Sigmoid colon (tissue), 7 donors: ENCODE measurements at regions of chr1 and their contacts with region 1.

Region 1: GRCh38 chr1:63773815-63774616 is at the start of gene ROR1:
- DNase-seq: peak; percentile 96
- H3K4me3 ChIP-seq: peak within 1 kb of the TSS; percentile 76 to 89 (median 88)
- H3K27ac ChIP-seq: peak within 1 kb of the TSS; percentile 86 to 96 (median 92)
- H3K4me1 ChIP-seq: peaks cover 0 to 48% (median 29%) of the 10 kb centered on the region in 4 donors
- H3K27me3 ChIP-seq: no peaks in the 10 kb centered on the region
- CTCF ChIP-seq: peak; percentile 72 to 81 (median 76)
- EP300 ChIP-seq: no peak
- POLR2A ChIP-seq: peak; percentile 30 to 44
- total RNA-seq, gene ROR1: 27.3 to 37.1 (median 29.3) TPM

Region 2: GRCh38 chr1:63367215-63368103 is 406.6 kb before region 1 on chr1 and contains the start of gene ALG6:
- intact Hi-C with region 1: no loop called
- DNase-seq: peak; percentile 94
- H3K4me3 ChIP-seq: peak within 1 kb of the TSS; percentile 81 to 90 (median 88)
- H3K27ac ChIP-seq: peak within 1 kb of the TSS; percentile 85 to 87 (median 86)
- H3K4me1 ChIP-seq: peaks cover 0 to 16% (median 10%) of the 10 kb centered on the region in 4 donors
- H3K27me3 ChIP-seq: no peaks in the 10 kb centered on the region
- CTCF ChIP-seq: peak in 1 of 4 experiments; percentile 9
- EP300 ChIP-seq: no peak
- POLR2A ChIP-seq: peak in 1 of 2 donors; percentile 36
- total RNA-seq, gene ALG6: 6.2 to 11.4 (median 7.1) TPM

Region 3: GRCh38 chr1:63691701-63692425 is 82.2 kb before region 1 on chr1:
- intact Hi-C with region 1: loop called (anchors 2 kb)
- DNase-seq: peak; percentile 84
- H3K4me3 ChIP-seq: no peak overlapping the region
- H3K27ac ChIP-seq: peak overlapping the region in 3 of 4 donors; percentile 57 to 74 (median 60)
- H3K4me1 ChIP-seq: peaks cover 0 to 30% (median 20%) of the 10 kb centered on the region in 4 donors
- H3K27me3 ChIP-seq: no peaks in the 10 kb centered on the region
- CTCF ChIP-seq: peak; percentile 62 to 82 (median 68)
- EP300 ChIP-seq: peak in 1 of 4 donors; percentile 38
- POLR2A ChIP-seq: no peak

Region 4: GRCh38 chr1:63868268-63868781 is 94.3 kb after region 1 on chr1:
- intact Hi-C with region 1: no loop called
- DNase-seq: peak; percentile 76
- H3K4me3 ChIP-seq: no peak overlapping the region
- H3K27ac ChIP-seq: peak overlapping the region in 3 of 4 donors; percentile 73 to 80 (median 74)
- H3K4me1 ChIP-seq: peaks cover 0 to 85% (median 51%) of the 10 kb centered on the region in 4 donors
- H3K27me3 ChIP-seq: no peaks in the 10 kb centered on the region
- CTCF ChIP-seq: peak in 1 of 4 experiments; percentile 14
- EP300 ChIP-seq: no peak
- POLR2A ChIP-seq: no peak

Region 5: GRCh38 chr1:63917571-63918417 is 143.8 kb after region 1 on chr1:
- intact Hi-C with region 1: loop called (anchors 5 kb)
- DNase-seq: no peak
- H3K4me3 ChIP-seq: no peak overlapping the region
- H3K27ac ChIP-seq: no peak overlapping the region
- H3K4me1 ChIP-seq: peaks cover 0 to 52% (median 43%) of the 10 kb centered on the region in 4 donors
- H3K27me3 ChIP-seq: no peaks in the 10 kb centered on the region
- CTCF ChIP-seq: peak in 1 of 4 experiments; percentile 9
- EP300 ChIP-seq: no peak
- POLR2A ChIP-seq: no peak

Region 6: GRCh38 chr1:64136752-64137411 is 362.9 kb after region 1 on chr1:
- intact Hi-C with region 1: loop called (anchors 1 kb)
- DNase-seq: peak; percentile 88
- H3K4me3 ChIP-seq: no peak overlapping the region
- H3K27ac ChIP-seq: peak overlapping the region in 2 of 4 donors; percentile 10 to 34
- H3K4me1 ChIP-seq: peaks cover 0 to 24% (median 19%) of the 10 kb centered on the region in 4 donors
- H3K27me3 ChIP-seq: no peaks in the 10 kb centered on the region
- CTCF ChIP-seq: peak; percentile 79 to 88 (median 86)
- EP300 ChIP-seq: no peak
- POLR2A ChIP-seq: no peak